Ovary (tissue), 10 donors: ENCODE measurements at regions of chr10 and their contacts with region 1.

Region 1: GRCh38 chr10:101441541-101442455 is 87.8 kb downstream of the BTRC start:
- DNase-seq: no peak
- H3K4me3 ChIP-seq: no peak overlapping the region
- H3K27ac ChIP-seq: no peak overlapping the region
- H3K4me1 ChIP-seq: no peaks in the 10 kb centered on the region
- H3K27me3 ChIP-seq: no peaks in the 10 kb centered on the region
- CTCF ChIP-seq: peak in 1 of 3 donors; percentile 18
- EP300 ChIP-seq: no peak
- POLR2A ChIP-seq: no peak

Region 2: GRCh38 chr10:101297901-101298486 is 143.8 kb before region 1 on chr10:
- intact Hi-C with region 1: loop called in 1 of 4 experiments (anchors 10 kb)
- DNase-seq: peak; percentile 31 to 77 (median 56)
- H3K4me3 ChIP-seq: no peak overlapping the region
- H3K27ac ChIP-seq: no peak overlapping the region
- H3K4me1 ChIP-seq: no peaks in the 10 kb centered on the region
- H3K27me3 ChIP-seq: no peaks in the 10 kb centered on the region
- CTCF ChIP-seq: peak in 2 of 3 donors; percentile 11 to 44
- EP300 ChIP-seq: no peak
- POLR2A ChIP-seq: no peak

Region 3: GRCh38 chr10:101400585-101400984 is 41.2 kb before region 1 on chr10:
- intact Hi-C with region 1: no loop called
- DNase-seq: no peak
- H3K4me3 ChIP-seq: no peak overlapping the region
- H3K27ac ChIP-seq: no peak overlapping the region
- H3K4me1 ChIP-seq: no peaks in the 10 kb centered on the region
- H3K27me3 ChIP-seq: no peaks in the 10 kb centered on the region
- CTCF ChIP-seq: no peak
- EP300 ChIP-seq: no peak
- POLR2A ChIP-seq: no peak